A549 (cell line): ENCODE measurements at regions of chr20 and their contacts with region 1.

Region 1: GRCh38 chr20:10179574-10180298 is 38.9 kb upstream of the SNAP25 start:
- DNase-seq: peak; percentile 21 to 49
- ATAC-seq: peak; percentile 58 to 87; a peak in 3 of 6 replicates
- H3K4me3 ChIP-seq: no peak overlapping the region
- H3K27ac ChIP-seq: no peak overlapping the region
- H3K4me1 ChIP-seq: no peaks in the 10 kb centered on the region
- CTCF ChIP-seq: peak; percentile 44
- EP300 ChIP-seq: no peak
- POLR2A ChIP-seq: no peak
- RAD21 ChIP-seq: peak in 1 of 2 experiments; percentile 38; a peak in 3 of 5 replicates

Region 2: DNA sequence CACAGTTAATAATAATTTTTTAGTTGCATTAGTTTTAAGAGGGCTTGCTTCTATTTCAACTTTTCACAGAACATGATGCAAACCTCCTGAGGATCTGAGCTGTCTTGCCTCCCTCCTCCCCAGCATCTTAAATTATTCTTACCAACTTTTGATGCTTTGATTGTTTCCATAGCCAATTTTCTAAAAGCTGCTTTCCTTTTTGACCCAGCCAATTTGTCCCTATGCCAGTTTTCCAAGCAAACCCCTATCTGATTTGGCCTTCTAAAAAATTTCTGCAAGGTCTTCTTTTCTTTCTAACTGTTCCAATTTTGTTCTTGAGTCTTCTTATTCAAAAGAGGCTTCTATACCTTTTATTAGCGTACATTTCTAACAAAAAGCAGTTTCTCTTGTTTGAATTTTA is 12.4 kb after region 1 on chr20:
- CTCF ChIA-PET with region 1: interaction called, 12 read pairs
- POLR2A ChIA-PET with region 1: no interaction called
- DNase-seq: no peak
- ATAC-seq: no peak
- H3K4me3 ChIP-seq: no peak overlapping the region
- H3K27ac ChIP-seq: no peak overlapping the region
- H3K4me1 ChIP-seq: no peaks in the 10 kb centered on the region
- CTCF ChIP-seq: no peak
- EP300 ChIP-seq: no peak
- POLR2A ChIP-seq: no peak
- RAD21 ChIP-seq: no peak